ENCODE measurements at regions of chr15 and their contacts with region 1.

Region 1: DNA sequence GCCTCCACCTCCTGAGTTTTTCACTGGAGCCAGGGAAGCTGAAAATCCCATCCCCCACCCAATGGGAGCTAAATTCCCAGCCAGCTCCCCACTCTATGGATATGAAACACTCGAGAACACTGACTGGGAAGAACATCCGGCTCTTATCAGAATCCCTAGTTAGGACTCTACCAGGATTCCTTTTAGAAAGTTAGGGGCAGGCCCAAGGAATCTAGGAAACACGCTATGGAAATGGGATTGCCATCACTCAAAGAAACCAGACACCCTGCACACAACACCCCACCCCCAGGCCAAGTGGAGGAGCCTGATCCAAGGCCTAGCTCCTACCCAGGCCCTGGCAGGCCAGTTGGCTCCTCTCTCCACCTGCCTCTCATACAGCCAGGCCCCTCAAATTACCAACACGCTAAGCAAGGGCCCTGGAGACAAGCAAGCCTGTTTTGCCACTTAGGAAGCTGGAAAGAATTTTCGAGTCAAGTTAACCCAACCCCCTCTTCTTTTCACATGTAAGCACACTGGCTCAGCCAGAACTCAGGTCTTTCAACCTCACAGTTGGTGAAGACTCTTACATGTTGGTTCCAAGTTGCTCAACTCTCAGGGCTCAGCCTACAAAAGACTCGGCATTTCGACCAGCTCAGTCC is 75.5 kb downstream of the RBPMS2 start:
- DNase-seq: no peak
- ATAC-seq: no peak
- H3K4me3 Mint-ChIP-seq: no peak overlapping the region
- H3K27ac Mint-ChIP-seq: no peak overlapping the region
- H3K4me1 Mint-ChIP-seq: peaks cover 62% of the 10 kb centered on the region
- H3K27me3 Mint-ChIP-seq: no peaks in the 10 kb centered on the region
- CTCF ChIP-seq: no peak

Region 2: DNA sequence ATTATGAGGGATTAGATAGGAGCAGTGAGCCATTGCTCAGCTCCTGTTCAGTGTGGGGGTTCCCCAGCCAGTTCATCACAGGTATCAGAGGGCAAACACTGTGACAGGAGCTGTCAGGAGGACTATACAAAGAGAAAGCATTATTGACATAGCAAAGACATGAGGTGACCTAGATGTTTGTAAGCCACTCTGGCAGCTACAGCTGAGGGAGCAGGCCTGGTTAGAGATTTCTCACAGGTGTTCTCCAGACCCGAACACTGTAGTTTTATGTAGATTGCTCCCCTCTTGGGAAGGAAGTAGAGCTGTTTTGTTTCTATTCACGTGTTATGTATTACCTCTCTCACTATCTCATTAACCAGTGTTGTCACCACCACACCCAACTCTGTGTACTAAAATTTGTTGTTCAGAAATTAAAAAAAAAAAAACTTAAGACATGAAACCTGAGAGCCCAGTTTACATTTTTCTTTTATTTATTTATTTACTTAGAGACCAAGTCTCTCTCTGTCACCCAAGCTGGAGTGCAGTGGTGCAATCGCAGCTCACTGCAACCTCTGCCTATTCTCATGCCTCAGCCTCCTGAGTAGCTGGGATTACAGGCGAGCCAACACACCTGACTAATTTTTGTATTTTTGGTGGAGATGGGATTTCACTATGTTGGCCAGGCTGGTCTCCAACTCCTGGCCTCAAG is 48.2 kb before region 1 on chr15:
- CTCF ChIA-PET with region 1: no interaction called
- POLR2A ChIA-PET with region 1: no interaction called
- intact Hi-C with region 1: no loop called
- DNase-seq: peak; percentile 57
- ATAC-seq: peak; percentile 96
- H3K4me3 Mint-ChIP-seq: peak overlapping the region; percentile 18
- H3K27ac Mint-ChIP-seq: peak overlapping the region; percentile 68
- H3K4me1 Mint-ChIP-seq: peaks cover 35% of the 10 kb centered on the region
- H3K27me3 Mint-ChIP-seq: no peaks in the 10 kb centered on the region
- CTCF ChIP-seq: no peak

Region 3: GRCh38 chr15:64681424-64682024 is 18.3 kb before region 1 on chr15:
- CTCF ChIA-PET with region 1: interaction called, 35 read pairs
- POLR2A ChIA-PET with region 1: interaction called, 3 read pairs
- intact Hi-C with region 1: no loop called
- DNase-seq: peak; percentile 24
- ATAC-seq: peak; percentile 65
- H3K4me3 Mint-ChIP-seq: no peak overlapping the region
- H3K27ac Mint-ChIP-seq: peak overlapping the region; percentile 34
- H3K4me1 Mint-ChIP-seq: peaks cover 4% of the 10 kb centered on the region
- H3K27me3 Mint-ChIP-seq: no peaks in the 10 kb centered on the region
- CTCF ChIP-seq: peak; percentile 40

Region 4: DNA sequence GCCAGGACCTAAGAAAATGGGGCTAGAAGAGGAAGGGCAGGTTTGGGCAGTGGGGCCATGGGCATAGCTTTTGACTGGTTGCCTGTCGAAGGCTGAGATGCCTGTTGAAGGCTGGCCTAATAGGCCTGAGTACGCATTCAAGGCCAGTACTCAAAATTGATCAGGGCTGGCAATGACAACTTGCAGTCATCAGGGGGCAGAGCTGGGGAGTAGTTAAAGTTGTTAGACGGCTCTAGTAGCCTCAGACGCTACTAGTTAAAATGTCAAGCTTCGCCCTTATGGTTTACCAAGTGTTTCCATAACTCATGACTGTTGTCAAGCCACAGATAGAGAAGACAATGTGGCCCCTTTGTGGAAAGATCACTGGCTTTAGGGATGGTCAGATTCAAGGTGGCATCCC is 261.1 kb after region 1 on chr15:
- CTCF ChIA-PET with region 1: no interaction called
- POLR2A ChIA-PET with region 1: no interaction called
- intact Hi-C with region 1: no loop called
- DNase-seq: no peak
- ATAC-seq: no peak
- H3K4me3 Mint-ChIP-seq: no peak overlapping the region
- H3K27ac Mint-ChIP-seq: no peak overlapping the region
- H3K4me1 Mint-ChIP-seq: no peaks in the 10 kb centered on the region
- H3K27me3 Mint-ChIP-seq: no peaks in the 10 kb centered on the region
- CTCF ChIP-seq: no peak

Region 5: DNA sequence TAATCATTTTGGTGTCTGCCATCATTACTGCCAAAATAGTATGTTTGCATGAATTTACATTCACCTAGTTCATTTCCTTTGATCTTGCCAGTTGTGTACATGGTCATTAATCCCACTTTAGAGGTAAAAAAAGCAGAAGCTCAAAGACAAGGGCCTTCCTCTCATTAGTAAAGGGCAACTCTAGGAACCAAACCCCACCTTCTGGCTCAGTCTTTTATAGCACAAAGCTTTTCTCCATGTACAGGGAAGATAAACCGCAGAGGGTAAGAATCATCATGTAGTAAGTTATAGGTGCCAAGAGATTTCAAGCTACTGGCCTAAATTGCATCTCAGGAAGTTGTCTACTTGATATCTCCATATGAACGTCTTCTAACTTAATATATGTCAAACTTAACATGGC is 309.1 kb after region 1 on chr15:
- CTCF ChIA-PET with region 1: no interaction called
- POLR2A ChIA-PET with region 1: no interaction called
- intact Hi-C with region 1: no loop called
- DNase-seq: no peak
- ATAC-seq: no peak
- H3K4me3 Mint-ChIP-seq: no peak overlapping the region
- H3K27ac Mint-ChIP-seq: no peak overlapping the region
- H3K4me1 Mint-ChIP-seq: no peaks in the 10 kb centered on the region
- H3K27me3 Mint-ChIP-seq: no peaks in the 10 kb centered on the region
- CTCF ChIP-seq: no peak